Breast epithelium (tissue), 4 donors: ENCODE measurements at regions of chr12 and their contacts with region 1.

Region 1: DNA sequence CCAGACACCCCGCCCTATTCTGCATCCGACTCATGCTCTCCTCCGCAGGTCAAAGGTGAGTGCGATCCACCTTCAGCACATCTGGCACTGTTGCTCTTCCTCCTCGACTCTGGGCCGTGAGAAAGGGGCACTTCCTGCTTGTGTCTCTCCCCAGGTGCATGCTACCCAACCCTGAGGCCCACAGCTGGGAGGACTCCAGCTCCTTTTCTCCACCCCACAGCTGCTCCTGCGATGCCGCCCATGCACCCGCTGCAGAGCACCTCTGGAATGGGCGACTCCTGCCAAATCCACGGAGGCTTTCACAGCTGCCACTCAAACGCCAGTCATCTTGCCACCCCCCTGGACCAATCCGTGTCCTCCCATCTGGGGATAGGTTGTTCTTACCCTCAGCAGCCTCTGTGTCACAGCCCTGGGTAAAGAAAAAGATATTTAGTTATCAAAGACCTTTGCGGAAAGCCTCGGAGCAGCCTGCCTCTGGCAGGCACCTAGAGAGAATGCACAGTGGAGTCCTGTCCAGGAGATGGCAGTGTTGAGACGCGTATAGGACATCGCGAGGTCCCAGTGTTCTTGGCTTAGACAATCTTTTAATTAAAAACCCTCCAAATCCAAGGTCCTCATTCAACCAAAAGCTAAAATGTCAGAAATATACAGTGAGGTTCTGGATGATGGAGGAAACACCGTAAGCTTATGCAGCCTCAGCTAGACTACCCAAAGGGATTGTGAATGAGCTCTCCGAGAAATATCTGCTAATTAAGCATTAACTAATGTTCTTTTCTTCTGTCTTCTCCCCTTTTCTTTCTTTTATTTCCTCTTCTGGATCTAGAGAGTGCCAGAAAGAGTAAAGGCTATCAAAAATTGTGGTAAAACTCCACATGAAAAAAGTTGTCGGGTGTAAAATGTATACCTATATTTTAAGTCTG is 54.3 kb downstream of the MYRFL start:
- DNase-seq: peak; percentile 36 to 69
- H3K4me3 ChIP-seq: peak overlapping the region in 2 of 3 donors; percentile 23 to 50
- H3K27ac ChIP-seq: no peak overlapping the region
- H3K4me1 ChIP-seq: no peaks in the 10 kb centered on the region
- H3K27me3 ChIP-seq: no peaks in the 10 kb centered on the region
- CTCF ChIP-seq: peak in 2 of 3 donors; percentile 79 to 80
- POLR2A ChIP-seq: no peak

Region 2: GRCh38 chr12:70576346-70577282 is 697.3 kb after region 1 on chr12:
- intact Hi-C with region 1: loop called (anchors 5 kb)
- DNase-seq: no peak
- H3K4me3 ChIP-seq: no peak overlapping the region
- H3K27ac ChIP-seq: no peak overlapping the region
- H3K4me1 ChIP-seq: no peaks in the 10 kb centered on the region
- H3K27me3 ChIP-seq: no peaks in the 10 kb centered on the region
- CTCF ChIP-seq: peak; percentile 51 to 87 (median 70)
- POLR2A ChIP-seq: no peak